MCF 10A (cell line): ENCODE measurements at regions of chr16 and their contacts with region 1.

Region 1: DNA sequence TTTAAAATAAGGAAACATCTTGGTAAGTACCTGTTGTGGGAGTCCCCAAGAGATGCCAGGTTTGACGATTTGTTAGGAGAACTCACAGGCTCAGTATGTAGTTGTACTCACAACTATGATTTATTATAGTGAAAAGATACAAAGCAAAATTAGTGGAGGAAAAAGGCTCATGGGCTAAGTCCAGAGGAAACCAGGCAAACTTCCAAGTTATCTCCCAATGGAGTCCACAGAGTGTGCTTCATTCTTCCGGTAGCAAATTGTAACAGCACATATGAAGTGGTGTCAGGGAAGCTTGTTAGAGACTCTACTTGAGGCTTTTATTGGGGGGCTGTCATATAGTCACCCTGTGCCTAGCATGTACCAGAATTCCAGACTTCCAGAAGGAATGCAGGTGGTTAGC is 2.3 kb downstream of the DDX19A start:
- DNase-seq: no peak
- H3K4me3 Mint-ChIP-seq: no peak overlapping the region
- H3K27ac Mint-ChIP-seq: no peak overlapping the region
- H3K4me1 Mint-ChIP-seq: peaks cover 6% of the 10 kb centered on the region
- H3K27me3 Mint-ChIP-seq: no peaks in the 10 kb centered on the region
- CTCF ChIP-seq: no peak

Region 2: DNA sequence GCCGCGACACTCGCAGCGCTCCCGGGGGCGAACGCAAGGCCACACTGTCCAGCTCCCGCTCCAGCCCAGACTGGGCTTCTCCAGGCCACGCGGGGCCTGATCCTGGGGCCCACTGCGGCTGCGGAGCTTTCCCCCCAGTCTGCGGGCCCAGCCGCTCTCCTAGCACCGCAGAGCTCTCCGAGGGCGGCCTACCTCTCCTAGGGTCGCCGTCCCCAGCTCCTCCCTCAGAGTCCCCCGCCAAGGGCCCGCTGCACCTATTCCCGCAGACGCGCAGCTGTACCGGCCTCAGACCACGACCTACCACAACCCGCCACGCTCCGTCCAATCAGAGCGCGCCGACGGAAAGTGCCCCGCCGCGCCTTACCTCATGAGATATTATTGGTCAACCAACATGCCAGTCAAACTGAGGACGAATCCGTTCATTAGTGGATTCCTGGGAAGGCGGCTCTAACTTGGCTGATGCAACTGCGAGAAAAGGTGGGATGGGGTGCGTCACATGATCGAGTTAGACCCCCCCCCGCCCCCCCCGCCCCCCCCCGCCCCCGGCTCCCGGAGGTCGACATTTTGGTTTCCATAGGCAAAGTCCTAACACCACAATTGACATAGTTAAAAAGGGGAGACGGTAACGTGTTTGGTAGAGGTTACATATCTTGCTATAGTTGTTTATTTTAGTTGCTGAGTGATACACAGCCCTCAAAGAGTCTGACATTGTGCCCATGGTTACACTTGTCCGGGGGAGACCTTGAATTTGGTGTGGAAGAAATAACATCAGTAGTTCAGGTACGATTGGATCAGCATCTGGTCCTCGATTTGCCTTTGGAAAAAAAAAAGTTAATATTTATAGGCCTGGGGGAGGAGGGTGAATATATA is 59.5 kb before region 1 on chr16 and contains the start of gene AARS1:
- CTCF ChIA-PET with region 1: no interaction called
- POLR2A ChIA-PET with region 1: interaction called, 19 read pairs
- intact Hi-C with region 1: no loop called
- DNase-seq: peak; percentile 100
- H3K4me3 Mint-ChIP-seq: peak within 1 kb of the TSS; percentile 86
- H3K27ac Mint-ChIP-seq: peak within 1 kb of the TSS; percentile 94
- H3K4me1 Mint-ChIP-seq: peaks cover 6% of the 10 kb centered on the region
- H3K27me3 Mint-ChIP-seq: no peaks in the 10 kb centered on the region
- CTCF ChIP-seq: no peak
- total RNA-seq, gene AARS1: 314 and 390 TPM in 2 replicates

Region 3: GRCh38 chr16:70298988-70299938 is 49.7 kb before region 1 on chr16 and contains the start of gene DDX19B:
- CTCF ChIA-PET with region 1: interaction called, 3 read pairs
- POLR2A ChIA-PET with region 1: interaction called, 94 read pairs
- intact Hi-C with region 1: no loop called
- DNase-seq: peak; percentile 56
- H3K4me3 Mint-ChIP-seq: peak within 1 kb of the TSS; percentile 89
- H3K27ac Mint-ChIP-seq: peak within 1 kb of the TSS; percentile 98
- H3K4me1 Mint-ChIP-seq: peaks cover 5% of the 10 kb centered on the region
- H3K27me3 Mint-ChIP-seq: no peaks in the 10 kb centered on the region
- CTCF ChIP-seq: no peak
- total RNA-seq, gene DDX19B: 38.6 and 38.8 TPM in 2 replicates

Region 4: DNA sequence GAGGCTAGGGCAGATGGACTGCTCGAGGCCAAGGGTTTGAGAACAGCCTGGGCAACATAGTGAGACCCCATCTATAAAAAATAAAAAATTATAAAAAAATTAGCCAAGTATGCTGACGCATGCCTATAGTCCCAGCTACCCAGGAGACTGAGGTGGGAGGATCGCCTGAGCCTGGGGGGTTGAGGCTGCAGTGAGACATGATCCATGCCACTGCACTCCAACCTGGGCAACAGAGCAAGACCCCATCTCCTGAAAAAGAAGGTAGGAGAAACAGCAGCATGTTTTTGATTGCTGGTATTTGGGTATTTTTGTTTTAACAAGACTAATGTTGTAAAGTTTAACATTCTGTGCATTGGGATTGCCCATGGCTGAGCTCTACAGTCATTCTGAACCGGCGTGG is 11.2 kb before region 1 on chr16:
- CTCF ChIA-PET with region 1: no interaction called
- POLR2A ChIA-PET with region 1: interaction called, 17 read pairs
- intact Hi-C with region 1: no loop called
- DNase-seq: no peak
- H3K4me3 Mint-ChIP-seq: no peak overlapping the region
- H3K27ac Mint-ChIP-seq: no peak overlapping the region
- H3K4me1 Mint-ChIP-seq: no peaks in the 10 kb centered on the region
- H3K27me3 Mint-ChIP-seq: no peaks in the 10 kb centered on the region
- CTCF ChIP-seq: no peak

Region 5: DNA sequence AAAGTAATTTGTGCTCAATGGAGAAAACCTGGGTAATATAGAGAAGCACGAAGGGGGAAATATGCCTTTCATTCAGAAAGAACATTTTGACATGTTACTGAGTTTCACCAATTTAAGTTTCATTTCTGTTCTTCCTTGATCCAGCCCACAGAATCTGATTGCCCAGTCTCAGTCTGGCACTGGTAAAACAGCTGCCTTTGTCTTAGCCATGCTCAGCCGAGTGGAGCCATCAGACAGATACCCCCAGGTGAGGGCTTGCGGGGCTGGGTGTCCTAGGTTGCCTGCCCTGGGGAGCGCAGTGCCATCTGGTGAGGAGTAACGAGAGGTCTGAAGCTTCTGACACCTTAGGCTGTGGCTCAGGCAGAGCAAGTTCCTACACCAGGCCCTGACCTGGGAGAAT is 15.4 kb after region 1 on chr16:
- CTCF ChIA-PET with region 1: interaction called, 10 read pairs
- POLR2A ChIA-PET with region 1: interaction called, 32 read pairs
- intact Hi-C with region 1: no loop called
- DNase-seq: no peak
- H3K4me3 Mint-ChIP-seq: no peak overlapping the region
- H3K27ac Mint-ChIP-seq: no peak overlapping the region
- H3K4me1 Mint-ChIP-seq: no peaks in the 10 kb centered on the region
- H3K27me3 Mint-ChIP-seq: no peaks in the 10 kb centered on the region
- CTCF ChIP-seq: no peak

Region 6: GRCh38 chr16:70396246-70396904 is 47.4 kb after region 1 on chr16:
- CTCF ChIA-PET with region 1: no interaction called
- POLR2A ChIA-PET with region 1: no interaction called
- intact Hi-C with region 1: no loop called
- DNase-seq: no peak
- H3K4me3 Mint-ChIP-seq: no peak overlapping the region
- H3K27ac Mint-ChIP-seq: no peak overlapping the region
- H3K4me1 Mint-ChIP-seq: peaks cover 12% of the 10 kb centered on the region
- H3K27me3 Mint-ChIP-seq: no peaks in the 10 kb centered on the region
- CTCF ChIP-seq: no peak

Region 7: GRCh38 chr16:70454222-70455034 is 105.4 kb after region 1 on chr16 and contains the start of gene FCSK:
- CTCF ChIA-PET with region 1: no interaction called
- POLR2A ChIA-PET with region 1: interaction called, 11 read pairs
- intact Hi-C with region 1: no loop called
- DNase-seq: peak; percentile 75
- H3K4me3 Mint-ChIP-seq: peak within 1 kb of the TSS; percentile 92
- H3K27ac Mint-ChIP-seq: peak within 1 kb of the TSS; percentile 89
- H3K4me1 Mint-ChIP-seq: peaks cover 6% of the 10 kb centered on the region
- H3K27me3 Mint-ChIP-seq: no peaks in the 10 kb centered on the region
- CTCF ChIP-seq: no peak
- total RNA-seq, gene FCSK: 13.7 and 19.0 TPM in 2 replicates

Region 8: DNA sequence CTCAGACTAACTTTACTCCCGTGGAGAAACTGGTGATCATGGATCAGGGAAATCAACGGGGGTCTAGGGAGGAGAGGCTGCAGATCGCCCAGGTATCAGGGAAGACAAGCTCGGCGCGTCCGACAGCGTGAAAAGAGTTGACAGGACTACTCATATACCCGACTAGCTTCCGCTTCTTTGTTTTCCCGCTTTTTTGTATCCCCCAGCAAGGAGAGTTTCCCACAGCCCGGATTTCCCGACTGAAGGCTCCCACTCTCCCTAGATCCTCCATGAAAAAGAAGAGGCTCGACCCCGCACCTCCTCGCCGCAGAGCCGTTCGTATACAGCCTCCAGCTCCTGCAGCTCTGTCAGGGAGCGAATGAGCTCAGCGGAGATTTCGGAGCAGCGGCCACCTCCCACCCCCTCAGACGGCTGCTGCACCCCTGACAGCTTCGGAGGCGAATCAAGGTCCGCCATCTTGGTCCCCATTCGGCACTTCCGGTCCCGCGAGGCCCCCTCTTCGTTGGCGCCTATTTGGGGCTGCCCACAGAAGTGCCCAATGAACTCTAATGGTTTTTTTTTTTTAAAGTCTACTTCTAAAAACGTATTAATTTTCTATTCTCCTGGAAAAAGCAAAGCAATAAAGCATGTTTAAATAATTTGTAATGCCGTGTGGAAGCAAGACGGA is 174.2 kb after region 1 on chr16 and contains the start of gene COG4:
- CTCF ChIA-PET with region 1: no interaction called
- POLR2A ChIA-PET with region 1: interaction called, 26 read pairs
- intact Hi-C with region 1: no loop called
- DNase-seq: peak; percentile 87
- H3K4me3 Mint-ChIP-seq: peak within 1 kb of the TSS; percentile 98
- H3K27ac Mint-ChIP-seq: peak within 1 kb of the TSS; percentile 97
- H3K4me1 Mint-ChIP-seq: peaks cover 20% of the 10 kb centered on the region
- H3K27me3 Mint-ChIP-seq: no peaks in the 10 kb centered on the region
- CTCF ChIP-seq: no peak
- total RNA-seq, gene COG4: 62.2 and 64.9 TPM in 2 replicates